SK-N-SH (cell line): ENCODE measurements at regions of chr16 and their contacts with region 1.

Region 1: DNA sequence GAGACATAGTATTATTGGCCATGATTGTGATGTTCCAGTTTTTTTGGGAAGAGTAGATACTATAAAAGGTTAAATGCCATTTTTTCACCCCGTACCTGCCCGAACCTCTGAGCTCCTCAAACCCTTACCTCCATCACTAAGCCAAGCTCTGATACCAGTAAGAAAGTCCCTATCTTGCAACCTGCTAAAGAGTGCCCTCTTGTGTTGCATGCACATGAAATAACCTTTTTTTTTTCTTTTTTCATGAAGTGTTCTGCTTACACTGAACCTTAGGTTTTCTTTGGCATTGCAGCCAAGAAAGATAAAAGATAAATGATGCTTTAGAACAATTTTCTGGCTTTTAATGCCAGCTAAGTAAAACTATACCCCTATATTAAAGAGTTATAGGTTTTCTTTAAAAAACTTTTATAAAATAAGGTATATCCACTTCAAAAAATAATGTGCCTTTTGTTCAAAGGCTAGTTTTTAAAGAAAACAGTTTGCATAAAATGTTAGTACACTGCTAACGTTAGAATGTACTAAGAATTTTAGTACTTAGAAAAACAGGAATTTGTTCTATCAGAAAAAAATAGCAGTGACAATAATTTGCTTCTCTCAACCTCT is 295.3 kb upstream of the PMFBP1 start:
- DNase-seq: peak; percentile 37
- H3K4me3 ChIP-seq: no peak overlapping the region; a peak in 1 of 4 replicates
- H3K27ac ChIP-seq: no peak overlapping the region
- H3K4me1 ChIP-seq: no peaks in the 10 kb centered on the region; a peak in 1 of 4 replicates
- H3K27me3 ChIP-seq: no peaks in the 10 kb centered on the region
- CTCF ChIP-seq: peak; percentile 77
- EP300 ChIP-seq: no peak
- RAD21 ChIP-seq: peak; percentile 85

Region 2: DNA sequence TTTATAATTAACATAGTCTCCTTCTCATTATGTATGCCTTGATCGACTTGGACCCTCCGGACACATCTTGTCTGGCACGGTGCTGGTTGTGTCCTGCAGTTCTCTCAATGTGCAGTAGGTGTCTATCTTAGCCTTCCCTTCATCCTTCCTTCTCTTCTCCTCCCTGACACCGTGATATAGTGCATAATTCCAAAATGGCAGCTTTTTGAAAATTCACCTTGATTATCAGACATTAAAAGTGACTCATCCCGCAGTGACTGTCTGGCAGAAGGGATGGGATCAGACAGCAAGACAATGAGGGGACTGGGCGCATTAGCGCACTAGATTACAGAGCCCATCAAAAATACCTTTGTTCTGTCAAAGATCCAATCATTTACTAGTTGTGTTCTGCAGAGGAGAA is 225.3 kb before region 1 on chr16:
- CTCF ChIA-PET with region 1: interaction called, 15 read pairs
- POLR2A ChIA-PET with region 1: no interaction called
- DNase-seq: peak; percentile 52
- H3K4me3 ChIP-seq: no peak overlapping the region
- H3K27ac ChIP-seq: peak overlapping the region in 1 of 2 experiments; percentile 76; a peak in 2 of 4 replicates
- H3K4me1 ChIP-seq: peaks cover 0 to 22% of the 10 kb centered on the region in 2 experiments; a peak in 2 of 4 replicates
- H3K27me3 ChIP-seq: no peaks in the 10 kb centered on the region
- CTCF ChIP-seq: peak; percentile 91
- EP300 ChIP-seq: no peak
- RAD21 ChIP-seq: peak; percentile 96

Region 3: DNA sequence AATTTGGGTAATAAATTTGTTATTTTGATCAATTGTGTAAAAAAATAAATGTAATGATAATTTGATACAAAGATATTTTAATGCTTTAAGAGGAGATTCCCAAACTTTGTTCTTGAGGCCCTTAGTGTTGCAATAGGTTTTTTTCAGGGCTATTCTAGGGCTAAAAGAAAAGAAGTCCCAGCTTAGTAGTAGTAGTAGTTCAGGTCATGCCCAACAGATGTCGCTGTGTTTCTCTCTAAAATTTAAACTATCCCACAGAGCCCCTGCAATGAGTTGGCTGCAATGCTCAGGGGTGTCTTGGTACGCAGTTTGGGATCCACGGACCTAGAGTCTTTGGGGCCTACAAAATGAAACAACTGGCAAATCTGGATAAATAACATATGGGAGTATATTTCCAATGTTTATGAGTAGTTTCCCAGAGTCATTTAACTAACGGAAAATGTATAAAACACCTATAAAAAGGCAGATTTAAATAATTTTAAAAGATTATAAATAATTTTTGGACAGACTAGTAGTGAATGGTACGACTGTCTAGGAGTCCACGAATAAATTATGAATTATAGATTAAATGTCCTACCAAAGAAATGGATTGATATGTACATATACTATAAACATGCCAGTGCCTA is 66.9 kb before region 1 on chr16:
- CTCF ChIA-PET with region 1: interaction called, 11 read pairs
- POLR2A ChIA-PET with region 1: no interaction called
- DNase-seq: peak; percentile 54
- H3K4me3 ChIP-seq: no peak overlapping the region; a peak in 1 of 4 replicates
- H3K27ac ChIP-seq: no peak overlapping the region
- H3K4me1 ChIP-seq: no peaks in the 10 kb centered on the region
- H3K27me3 ChIP-seq: no peaks in the 10 kb centered on the region
- CTCF ChIP-seq: peak; percentile 72
- EP300 ChIP-seq: no peak
- RAD21 ChIP-seq: peak; percentile 72